AG04449 (cell line): ENCODE measurements at regions of chr12 and their contacts with region 1.

Region 1: DNA sequence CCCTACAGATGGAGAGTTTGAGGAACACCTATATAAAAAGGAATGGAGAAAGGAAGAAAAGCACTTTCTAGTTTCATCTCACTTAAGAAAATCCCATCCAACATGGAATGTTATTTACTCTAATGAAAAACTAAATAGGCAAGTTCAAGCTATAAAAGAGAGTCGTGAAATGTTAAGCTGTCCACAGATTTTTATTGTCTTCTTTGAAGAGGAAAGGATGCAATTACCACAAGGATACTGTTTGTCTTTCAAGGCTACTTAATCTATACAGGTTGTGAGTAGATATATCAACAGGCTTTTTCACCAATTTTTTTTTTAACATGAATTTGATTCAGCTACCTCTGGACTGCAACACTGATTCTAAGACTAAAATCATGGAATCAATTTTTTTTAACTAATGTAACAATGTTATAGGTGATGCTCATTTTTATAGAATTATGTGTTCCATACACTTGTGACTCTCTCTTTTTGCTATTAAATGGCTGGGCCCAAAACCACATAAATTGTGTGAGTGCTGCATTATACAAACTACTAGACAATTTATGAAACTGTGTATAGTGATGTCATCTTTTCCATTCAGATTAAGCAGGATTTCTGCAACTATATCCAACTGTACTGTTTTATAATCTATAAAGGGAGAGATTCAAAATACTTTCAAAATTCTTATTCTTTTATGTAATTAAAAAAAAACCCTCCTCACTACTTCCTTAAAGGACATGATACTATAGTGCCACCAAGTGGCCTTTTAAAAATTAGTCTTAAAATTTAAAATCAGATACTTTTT is 26.8 kb upstream of the BMAL2 start:
- DNase-seq: no peak
- H3K4me3 ChIP-seq: no peak overlapping the region
- CTCF ChIP-seq: peak; percentile 2

Region 2: DNA sequence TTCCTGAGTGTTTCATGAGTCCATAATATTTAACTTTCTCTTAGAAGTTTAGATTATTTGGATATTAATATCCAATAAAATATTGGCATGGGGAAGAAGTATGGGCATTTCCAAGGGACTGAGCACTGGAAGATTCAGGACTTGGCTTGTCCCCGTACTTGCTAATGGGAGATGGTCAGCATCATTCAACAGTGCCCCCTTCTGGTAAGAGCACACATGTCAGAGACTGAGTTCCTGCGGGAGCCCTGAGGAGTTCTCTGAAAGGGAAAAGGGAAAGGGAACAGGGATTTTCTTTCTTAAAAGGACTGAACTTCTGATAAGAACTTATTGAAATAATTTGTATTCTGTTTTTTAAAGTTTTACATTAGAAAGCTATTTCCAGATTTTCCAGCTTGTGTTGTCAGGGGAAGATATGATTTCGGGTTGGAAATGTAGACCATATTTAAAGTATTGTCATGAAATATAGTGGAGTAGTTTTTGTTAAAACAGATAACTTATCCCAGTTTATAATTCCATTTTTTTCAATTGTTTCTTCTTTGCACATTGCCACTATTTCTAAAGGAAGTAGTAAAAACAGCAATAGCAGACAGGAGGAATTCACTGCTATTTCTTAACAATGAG is 163.7 kb before region 1 on chr12:
- CTCF ChIA-PET with region 1: interaction called, 16 read pairs
- POLR2A ChIA-PET with region 1: no interaction called
- DNase-seq: peak; percentile 28
- H3K4me3 ChIP-seq: no peak overlapping the region
- CTCF ChIP-seq: peak; percentile 86

Region 3: DNA sequence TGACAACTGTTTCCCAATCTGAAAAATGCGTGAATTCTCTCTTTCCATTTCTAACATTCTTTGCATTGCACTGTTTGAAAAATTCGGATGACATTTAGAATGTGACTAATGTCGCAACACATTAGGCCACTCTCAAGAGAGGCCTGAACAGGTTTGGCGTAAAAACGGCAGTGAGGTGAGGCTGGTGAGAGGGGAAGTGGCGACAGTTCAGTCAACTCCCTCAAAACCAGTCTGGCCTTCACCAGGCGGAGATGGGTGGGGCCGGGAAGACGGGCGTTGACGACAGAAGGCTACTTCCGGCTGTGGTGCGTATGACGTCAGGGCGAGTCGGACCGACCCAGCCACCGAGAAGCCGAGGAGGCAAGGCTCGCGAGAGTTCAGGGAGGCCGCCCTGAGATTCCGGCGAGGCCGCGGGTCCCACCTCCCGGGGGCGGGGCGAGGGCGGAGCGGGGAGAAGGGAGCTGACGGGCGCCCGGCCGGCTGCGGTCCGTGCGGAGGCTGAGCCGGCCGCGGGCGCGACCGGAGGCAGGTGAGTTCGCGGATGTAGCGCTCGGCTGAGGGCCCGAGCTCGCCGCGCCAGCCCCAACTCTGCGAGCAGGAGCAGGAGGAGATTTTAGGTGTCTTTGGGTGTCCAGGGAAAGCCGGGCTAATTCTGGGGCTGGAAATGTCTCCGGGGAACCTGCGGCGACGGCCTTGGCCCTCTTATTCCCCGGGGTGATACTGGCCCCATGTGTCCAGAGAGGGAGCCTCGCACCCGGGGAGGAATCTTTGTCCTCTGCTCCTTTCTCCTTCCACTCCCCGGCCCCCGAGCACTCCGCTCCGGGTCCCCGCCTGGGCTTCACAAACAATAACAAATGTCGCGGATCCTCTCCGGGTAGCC is 61.8 kb before region 1 on chr12 and contains the start of gene STK38L:
- CTCF ChIA-PET with region 1: interaction called, 12 read pairs
- POLR2A ChIA-PET with region 1: no interaction called
- DNase-seq: peak; percentile 57
- H3K4me3 ChIP-seq: peak within 1 kb of the TSS; percentile 79
- CTCF ChIP-seq: peak; percentile 44

Region 4: GRCh38 chr12:27284751-27285150 is 21.1 kb before region 1 on chr12:
- CTCF ChIA-PET with region 1: interaction called, 14 read pairs
- POLR2A ChIA-PET with region 1: no interaction called
- DNase-seq: peak; percentile 59
- H3K4me3 ChIP-seq: no peak overlapping the region
- CTCF ChIP-seq: no peak

Region 5: GRCh38 chr12:27319409-27319808 is 13.5 kb after region 1 on chr12:
- CTCF ChIA-PET with region 1: interaction called, 40 read pairs
- POLR2A ChIA-PET with region 1: no interaction called
- DNase-seq: no peak
- H3K4me3 ChIP-seq: no peak overlapping the region
- CTCF ChIP-seq: no peak